Gastrocnemius medialis (tissue), 4 donors: ENCODE measurements at regions of chr20 and their contacts with region 1.

Region 1: DNA sequence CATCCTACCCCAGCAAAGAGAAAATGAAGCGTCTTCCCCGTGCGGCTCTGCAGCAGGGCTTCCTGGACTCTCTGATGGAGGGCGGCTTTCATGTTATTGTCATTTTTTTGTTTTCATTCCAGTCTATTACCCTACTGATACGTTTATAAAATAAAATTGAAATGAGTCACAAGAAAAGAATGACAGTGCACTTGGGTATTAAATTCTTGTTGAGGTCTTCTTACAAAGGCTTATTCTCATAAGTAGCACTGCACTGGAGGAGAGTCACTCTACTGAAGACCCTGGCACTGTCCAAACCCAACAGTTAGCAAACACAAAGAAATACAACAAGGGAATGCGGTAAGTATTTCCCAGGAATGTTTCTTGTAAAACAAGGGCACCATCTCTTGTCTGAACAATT is 379.3 kb downstream of the MAFB start:
- DNase-seq: no peak
- ATAC-seq: no peak
- H3K4me3 ChIP-seq: no peak overlapping the region
- H3K27ac ChIP-seq: no peak overlapping the region
- H3K4me1 ChIP-seq: peaks cover 19 to 36% of the 10 kb centered on the region in 2 donors
- H3K27me3 ChIP-seq: no peaks in the 10 kb centered on the region
- CTCF ChIP-seq: no peak
- POLR2A ChIP-seq: no peak

Region 2: DNA sequence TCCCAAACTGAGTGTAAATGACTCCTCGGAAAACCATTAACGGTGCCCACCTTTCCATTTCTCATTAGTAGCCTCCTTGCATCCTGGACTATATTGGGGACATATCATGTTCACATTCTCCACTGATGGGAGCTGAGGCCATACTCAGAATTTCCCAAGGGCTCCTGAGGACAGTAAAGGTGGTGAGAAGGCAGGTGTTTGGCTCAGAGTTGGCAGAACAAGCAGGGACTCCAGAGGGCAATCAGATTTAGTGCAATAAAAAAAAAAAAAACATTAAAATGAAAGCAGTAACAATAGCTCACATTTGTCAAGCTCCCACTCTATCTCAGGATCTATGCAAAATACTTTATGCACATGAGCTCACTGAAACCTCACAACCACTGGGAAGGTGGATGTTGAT is 22.0 kb before region 1 on chr20:
- in situ Hi-C with region 1: no loop called
- intact Hi-C with region 1: loop called (anchors 2 kb)
- DNase-seq: no peak
- ATAC-seq: peak; percentile 8 to 12
- H3K4me3 ChIP-seq: no peak overlapping the region
- H3K27ac ChIP-seq: peak overlapping the region; percentile 58 to 82 (median 74)
- H3K4me1 ChIP-seq: peaks cover 21 to 28% of the 10 kb centered on the region in 2 donors
- H3K27me3 ChIP-seq: no peaks in the 10 kb centered on the region
- CTCF ChIP-seq: no peak
- POLR2A ChIP-seq: no peak

Region 3: GRCh38 chr20:40323361-40323794 is 13.6 kb after region 1 on chr20:
- in situ Hi-C with region 1: no loop called
- intact Hi-C with region 1: no loop called
- DNase-seq: no peak
- ATAC-seq: no peak
- H3K4me3 ChIP-seq: no peak overlapping the region
- H3K27ac ChIP-seq: no peak overlapping the region
- H3K4me1 ChIP-seq: no peaks in the 10 kb centered on the region
- H3K27me3 ChIP-seq: no peaks in the 10 kb centered on the region
- CTCF ChIP-seq: no peak
- POLR2A ChIP-seq: no peak

Region 4: DNA sequence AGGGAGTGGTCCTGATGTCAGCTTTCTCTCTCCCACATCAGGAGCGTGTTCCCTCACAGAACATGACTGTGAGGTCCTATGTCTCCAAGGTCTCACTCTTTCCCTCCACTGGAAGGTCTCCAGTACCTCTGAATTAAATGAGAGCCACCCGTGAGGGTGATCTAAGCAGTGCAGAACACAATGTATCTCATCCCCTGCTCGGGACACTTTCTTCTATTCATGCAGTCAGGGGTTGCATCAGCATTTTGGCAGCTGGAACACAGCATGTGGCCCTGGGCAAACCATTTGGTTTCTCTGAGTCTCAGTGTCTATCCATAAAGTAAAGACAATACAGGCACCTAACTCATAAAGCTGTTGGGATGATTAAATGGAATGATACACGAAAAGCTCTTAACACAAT is 345.1 kb after region 1 on chr20:
- in situ Hi-C with region 1: no loop called
- intact Hi-C with region 1: loop called (anchors 5 kb)
- DNase-seq: peak; percentile 91
- ATAC-seq: peak; percentile 97
- H3K4me3 ChIP-seq: no peak overlapping the region
- H3K27ac ChIP-seq: peak overlapping the region; percentile 73 to 89 (median 80)
- H3K4me1 ChIP-seq: peaks cover 14 to 30% of the 10 kb centered on the region in 2 donors
- H3K27me3 ChIP-seq: no peaks in the 10 kb centered on the region
- CTCF ChIP-seq: no peak
- POLR2A ChIP-seq: peak; percentile 30 to 57